BJ (cell line): ENCODE measurements at regions of chr21 and their contacts with region 1.

Region 1: GRCh38 chr21:38355992-38356797 is 99.4 kb downstream of the KCNJ15 start:
- DNase-seq: no peak
- H3K4me3 ChIP-seq: no peak overlapping the region
- H3K27me3 ChIP-seq: no peaks in the 10 kb centered on the region
- CTCF ChIP-seq: peak; percentile 99

Region 2: DNA sequence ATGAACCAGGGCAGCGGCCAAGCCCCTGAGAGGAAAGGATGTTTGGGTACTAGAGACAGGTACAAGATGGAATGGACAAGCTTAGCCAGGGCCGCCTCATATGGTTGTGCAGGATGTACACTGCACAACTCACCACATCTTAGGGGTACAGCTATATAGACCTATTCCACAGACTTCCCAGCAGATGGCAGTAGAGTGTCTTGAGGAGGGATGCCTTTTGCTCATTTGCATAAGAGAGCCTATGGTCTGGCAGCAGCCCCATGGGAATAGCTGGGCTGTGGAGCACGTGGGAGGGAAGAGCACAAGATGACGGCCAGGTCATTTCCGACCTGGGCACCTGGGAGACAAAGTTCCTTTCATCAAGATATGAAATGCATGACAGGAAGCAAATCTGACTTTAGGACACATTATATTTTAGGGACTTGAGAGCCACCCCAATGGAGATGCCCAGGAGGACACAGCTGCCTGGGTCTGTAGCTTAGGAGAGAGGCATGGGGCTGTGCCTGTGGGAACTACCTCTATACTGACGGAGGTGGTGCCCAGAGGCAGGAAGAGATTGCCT is 655.5 kb before region 1 on chr21:
- CTCF ChIA-PET with region 1: interaction called, 26 read pairs
- POLR2A ChIA-PET with region 1: no interaction called
- DNase-seq: no peak
- H3K4me3 ChIP-seq: no peak overlapping the region
- H3K27me3 ChIP-seq: peaks cover 7% of the 10 kb centered on the region
- CTCF ChIP-seq: peak; percentile 82

Region 3: DNA sequence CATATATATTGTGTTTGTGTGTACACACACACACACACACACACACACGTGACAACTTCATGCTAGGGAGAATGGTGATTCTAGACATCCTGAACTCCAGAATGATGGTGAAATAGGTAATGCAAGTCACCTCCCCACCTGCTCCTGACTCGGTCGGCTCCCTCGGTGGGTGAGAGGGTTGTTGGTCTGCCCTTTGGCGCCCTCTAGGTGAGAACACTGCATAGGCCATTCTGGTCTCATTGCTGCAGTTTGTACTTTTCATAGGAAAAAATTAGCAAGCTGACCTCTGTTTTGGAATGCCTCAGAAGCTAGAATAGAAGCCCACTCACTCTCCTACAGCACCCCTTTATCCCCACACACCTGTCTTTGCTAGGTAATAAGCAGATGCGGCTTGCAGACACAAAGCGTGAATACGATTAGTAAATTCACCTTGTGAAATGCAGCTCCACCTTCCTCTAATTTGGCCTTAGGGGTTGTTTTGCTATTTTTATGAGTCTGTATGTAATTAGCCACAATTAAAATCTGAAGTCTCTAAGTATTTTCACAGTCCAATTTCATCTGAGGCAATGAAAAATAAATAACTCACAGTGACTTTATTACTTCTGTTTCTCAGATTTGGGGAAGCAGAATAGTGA is 229.4 kb before region 1 on chr21:
- CTCF ChIA-PET with region 1: interaction called, 21 read pairs
- POLR2A ChIA-PET with region 1: no interaction called
- DNase-seq: no peak
- H3K4me3 ChIP-seq: no peak overlapping the region
- H3K27me3 ChIP-seq: no peaks in the 10 kb centered on the region; the same call in 1 of the 2 replicates
- CTCF ChIP-seq: peak; percentile 89

Region 4: GRCh38 chr21:38181096-38181495 is 175.1 kb before region 1 on chr21:
- CTCF ChIA-PET with region 1: interaction called, 10 read pairs
- POLR2A ChIA-PET with region 1: no interaction called
- DNase-seq: peak; percentile 58
- H3K4me3 ChIP-seq: no peak overlapping the region
- H3K27me3 ChIP-seq: no peaks in the 10 kb centered on the region
- CTCF ChIP-seq: no peak

Region 5: DNA sequence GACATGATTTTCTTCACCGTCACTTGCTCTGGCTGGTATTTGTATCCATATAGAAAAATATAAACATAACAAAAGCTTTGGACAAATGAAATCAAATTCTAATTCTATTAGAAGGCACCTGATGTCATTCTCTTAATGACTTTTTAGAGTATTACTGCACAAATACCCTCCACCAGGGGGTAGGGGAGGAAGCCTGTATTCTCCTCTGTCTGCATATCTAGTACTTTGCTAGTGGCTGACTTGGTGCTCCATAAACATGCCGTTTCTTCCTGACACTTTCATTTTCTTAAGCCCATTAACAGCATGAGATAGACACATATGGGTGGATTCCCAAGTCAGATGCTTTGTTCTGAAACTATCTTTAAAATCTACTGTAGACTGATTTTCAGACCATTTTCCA is 120.0 kb before region 1 on chr21:
- CTCF ChIA-PET with region 1: interaction called, 42 read pairs
- POLR2A ChIA-PET with region 1: no interaction called
- DNase-seq: no peak
- H3K4me3 ChIP-seq: no peak overlapping the region
- H3K27me3 ChIP-seq: no peaks in the 10 kb centered on the region
- CTCF ChIP-seq: peak; percentile 37

Region 6: GRCh38 chr21:38333301-38334272 is 22.6 kb before region 1 on chr21:
- CTCF ChIA-PET with region 1: interaction called, 14 read pairs
- POLR2A ChIA-PET with region 1: no interaction called
- DNase-seq: no peak
- H3K4me3 ChIP-seq: no peak overlapping the region
- H3K27me3 ChIP-seq: no peaks in the 10 kb centered on the region
- CTCF ChIP-seq: peak; percentile 28; the same call in 1 of the 2 replicates

Region 7: GRCh38 chr21:38470762-38471161 is 114.6 kb after region 1 on chr21:
- CTCF ChIA-PET with region 1: no interaction called
- POLR2A ChIA-PET with region 1: no interaction called
- DNase-seq: no peak
- H3K4me3 ChIP-seq: no peak overlapping the region
- H3K27me3 ChIP-seq: no peaks in the 10 kb centered on the region; the same call in 1 of the 2 replicates
- CTCF ChIP-seq: no peak